ENCODE measurements at regions of chr11 and their contacts with region 1.

Region 1: DNA sequence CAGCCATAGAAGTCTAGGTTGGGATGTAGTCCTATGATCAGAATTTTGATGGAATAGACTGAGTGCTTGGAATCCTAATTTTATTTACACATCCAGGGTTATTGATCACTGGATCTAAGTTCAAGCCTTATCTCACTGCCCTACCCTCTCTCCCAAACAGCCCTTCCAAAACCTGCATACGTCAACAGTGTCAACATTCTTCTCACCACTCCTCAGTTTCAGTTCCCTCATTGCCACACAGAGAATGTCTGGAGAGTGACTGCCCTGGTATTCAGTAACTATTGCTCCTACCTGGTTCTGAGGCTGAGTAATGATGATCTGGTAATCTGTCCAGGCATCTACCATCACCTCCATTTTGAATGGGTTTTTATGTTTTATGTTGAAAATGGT is 60.0 kb downstream of the GLYATL1 start:
- DNase-seq: no peak
- ATAC-seq: peak; percentile 32

Region 2: GRCh38 chr11:59053387-59053786 is 54.1 kb after region 1 on chr11:
- intact Hi-C with region 1: no loop called
- DNase-seq: peak; percentile 82
- ATAC-seq: no peak

Region 3: DNA sequence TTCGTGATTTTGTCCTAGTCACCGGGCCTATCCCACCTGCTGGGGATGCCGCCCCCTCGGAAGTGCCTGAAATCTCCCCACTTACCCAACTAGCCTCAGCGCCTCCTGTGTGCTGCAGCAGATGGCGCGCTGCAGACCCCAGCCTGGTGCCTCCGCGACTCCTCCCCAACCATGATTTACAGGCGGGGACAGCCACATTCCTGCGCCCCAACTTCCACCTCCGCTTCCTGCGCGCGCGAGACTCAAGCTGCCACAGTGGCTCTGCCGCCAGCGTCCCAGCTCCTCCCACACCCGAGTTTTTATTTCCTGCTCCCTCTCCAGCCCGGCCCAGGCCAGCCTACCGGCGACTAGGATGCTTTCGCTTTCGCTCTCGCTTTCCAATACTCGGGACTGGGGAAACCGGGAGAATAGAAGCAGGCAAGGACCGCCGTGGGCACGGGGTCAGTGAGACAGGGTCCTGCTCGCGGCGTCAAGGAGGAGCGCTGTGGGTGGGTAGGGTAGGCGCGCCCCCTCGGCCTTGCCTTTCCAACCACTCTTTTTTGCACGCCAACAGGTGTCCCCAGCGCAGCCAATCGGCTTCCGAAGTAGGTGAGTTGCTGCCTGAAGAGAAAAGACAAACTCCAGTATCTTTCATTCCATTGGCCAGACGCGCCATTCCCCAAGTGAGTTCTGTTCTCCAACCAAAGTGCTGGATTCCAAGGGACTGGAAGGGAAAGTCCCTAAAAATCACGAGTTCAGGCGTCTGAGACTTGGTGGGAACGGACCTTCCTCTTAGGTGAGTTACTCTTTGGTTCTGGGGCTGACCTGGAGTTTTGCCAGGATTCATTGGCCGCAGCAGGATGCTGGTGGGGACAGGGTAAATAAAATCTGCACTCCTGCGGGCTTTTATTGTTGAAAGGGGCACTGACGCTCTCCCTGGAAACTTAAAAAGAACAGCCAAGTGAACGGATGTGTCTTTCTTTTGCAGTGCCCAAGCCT is 143.5 kb after region 1 on chr11 and contains the start of gene FAM111A:
- intact Hi-C with region 1: no loop called
- DNase-seq: peak; percentile 91
- ATAC-seq: peak; percentile 95
- total RNA-seq, gene FAM111A: 48.0 TPM

Region 4: DNA sequence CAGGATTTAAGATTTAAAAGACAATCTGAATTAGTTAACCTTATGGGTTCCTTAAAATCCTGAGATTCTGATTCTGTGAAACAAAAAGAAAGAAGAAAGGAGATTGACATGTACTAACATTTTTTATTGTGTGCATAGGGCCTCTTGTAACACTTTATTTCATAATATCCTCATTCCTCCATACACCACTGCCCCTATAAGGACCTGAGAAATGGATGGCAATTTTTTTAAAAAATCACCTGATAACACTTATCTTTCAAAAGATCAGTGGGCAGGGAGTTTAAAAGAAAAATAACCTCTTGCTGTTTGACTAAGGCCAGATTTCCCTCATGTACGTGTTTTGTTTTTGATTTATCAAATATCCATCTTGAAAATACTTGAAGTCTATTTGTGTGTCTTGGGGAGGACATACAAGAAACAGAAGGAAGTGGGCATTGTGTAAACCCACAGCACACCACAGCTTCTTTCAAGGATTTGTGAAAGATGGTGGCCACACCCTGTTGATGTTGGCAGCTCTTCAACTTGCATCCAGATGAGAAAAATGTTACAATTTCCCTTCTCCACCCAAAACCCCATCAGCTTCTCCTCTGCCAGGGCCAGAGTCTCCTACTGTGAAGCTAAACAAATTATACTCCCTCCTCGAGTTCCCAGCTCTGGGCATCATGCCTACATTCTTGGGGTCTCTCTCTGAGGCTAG is 248.4 kb after region 1 on chr11:
- intact Hi-C with region 1: loop called (anchors 10 kb)
- DNase-seq: no peak
- ATAC-seq: peak; percentile 90

Measured in sciatic nerve (tissue), 2 donors.